CD4-positive, alpha-beta T cell (primary cell): ENCODE measurements at regions of chr16 and their contacts with region 1.

Region 1: GRCh38 chr16:56931892-56932720 is at the start of gene HERPUD1:
- DNase-seq: peak; percentile 98 to 100 (median 99)
- ATAC-seq: peak; percentile 96
- H3K4me3 ChIP-seq: peak within 1 kb of the TSS; percentile 99
- H3K4me3 Mint-ChIP-seq: peak within 1 kb of the TSS; percentile 99
- H3K27ac ChIP-seq: peak within 1 kb of the TSS; percentile 81 to 93
- H3K27ac Mint-ChIP-seq: peak within 1 kb of the TSS; percentile 96
- H3K4me1 ChIP-seq: peaks cover 28% of the 10 kb centered on the region
- H3K4me1 Mint-ChIP-seq: peaks cover 39% of the 10 kb centered on the region
- H3K27me3 ChIP-seq: no peaks in the 10 kb centered on the region
- H3K27me3 Mint-ChIP-seq: no peaks in the 10 kb centered on the region
- CTCF ChIP-seq: peak; percentile 27
- total RNA-seq, gene HERPUD1: 217 to 227 TPM

Region 2: GRCh38 chr16:56713794-56714193 is 218.3 kb before region 1 on chr16:
- CTCF ChIA-PET with region 1: no interaction called
- POLR2A ChIA-PET with region 1: no interaction called
- intact Hi-C with region 1: no loop called
- DNase-seq: no peak
- ATAC-seq: no peak
- H3K4me3 ChIP-seq: no peak overlapping the region
- H3K4me3 Mint-ChIP-seq: no peak overlapping the region
- H3K27ac ChIP-seq: no peak overlapping the region
- H3K27ac Mint-ChIP-seq: no peak overlapping the region
- H3K4me1 ChIP-seq: peaks cover 16% of the 10 kb centered on the region
- H3K4me1 Mint-ChIP-seq: peaks cover 20% of the 10 kb centered on the region
- H3K27me3 ChIP-seq: no peaks in the 10 kb centered on the region
- H3K27me3 Mint-ChIP-seq: no peaks in the 10 kb centered on the region
- CTCF ChIP-seq: no peak

Region 3: DNA sequence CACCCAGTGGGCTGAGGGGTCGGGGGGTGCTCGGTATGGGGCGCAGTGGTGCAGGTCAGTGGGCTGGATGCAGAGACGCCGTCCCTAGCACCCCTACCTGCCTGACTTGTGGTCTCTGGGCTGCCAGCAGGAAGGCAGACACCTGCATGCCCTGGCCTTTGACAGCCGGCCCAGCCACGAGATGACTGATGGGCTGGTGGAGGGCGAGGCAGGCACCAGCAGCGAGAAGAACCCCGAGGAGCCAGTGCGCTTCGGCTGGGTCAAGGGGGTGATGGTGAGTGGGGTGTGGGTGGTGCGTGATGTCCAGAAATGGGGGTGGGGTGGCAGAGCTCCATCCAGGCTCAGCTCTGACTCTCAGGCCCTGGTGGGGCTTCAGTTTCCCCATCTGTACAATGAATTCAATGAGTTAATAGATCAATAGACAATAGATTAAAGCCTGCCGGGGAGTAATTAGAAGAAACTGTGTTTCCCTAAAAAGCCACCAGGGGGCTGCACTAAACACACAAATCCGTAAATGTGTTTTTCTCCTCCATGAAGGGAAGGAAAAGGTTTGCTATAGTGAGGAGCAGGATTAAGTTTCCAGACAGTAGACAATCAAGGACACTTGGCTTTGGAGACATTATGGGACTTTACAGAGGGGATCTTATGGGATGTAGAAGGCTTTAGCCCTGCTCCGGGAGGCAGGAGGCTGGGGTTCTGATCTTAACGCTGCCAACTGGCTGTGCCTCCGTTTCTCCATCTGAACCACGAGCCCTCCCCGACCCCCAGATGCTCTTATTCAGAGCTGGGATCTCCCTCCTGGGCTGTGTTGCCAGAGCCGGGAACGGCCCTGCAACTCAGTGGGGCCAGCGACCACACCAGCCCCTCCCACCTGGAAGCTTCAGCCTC is 64.9 kb before region 1 on chr16:
- CTCF ChIA-PET with region 1: interaction called, 3 read pairs
- POLR2A ChIA-PET with region 1: interaction called, 3 read pairs
- intact Hi-C with region 1: loop called (anchors 5 kb)
- DNase-seq: peak in 10 of 14 experiments; percentile 7 to 76 (median 29)
- ATAC-seq: peak; percentile 56
- H3K4me3 ChIP-seq: no peak overlapping the region
- H3K4me3 Mint-ChIP-seq: no peak overlapping the region
- H3K27ac ChIP-seq: no peak overlapping the region
- H3K27ac Mint-ChIP-seq: no peak overlapping the region
- H3K4me1 ChIP-seq: peaks cover 33% of the 10 kb centered on the region
- H3K4me1 Mint-ChIP-seq: peaks cover 13% of the 10 kb centered on the region
- H3K27me3 ChIP-seq: no peaks in the 10 kb centered on the region
- H3K27me3 Mint-ChIP-seq: no peaks in the 10 kb centered on the region
- CTCF ChIP-seq: peak; percentile 84

Region 4: GRCh38 chr16:56944954-56945839 is 13.1 kb after region 1 on chr16:
- CTCF ChIA-PET with region 1: no interaction called
- POLR2A ChIA-PET with region 1: interaction called, 51 read pairs
- intact Hi-C with region 1: no loop called
- DNase-seq: no peak
- ATAC-seq: peak; percentile 13
- H3K4me3 ChIP-seq: no peak overlapping the region
- H3K4me3 Mint-ChIP-seq: no peak overlapping the region
- H3K27ac ChIP-seq: no peak overlapping the region
- H3K27ac Mint-ChIP-seq: peak overlapping the region; percentile 10
- H3K4me1 ChIP-seq: peaks cover 3% of the 10 kb centered on the region
- H3K4me1 Mint-ChIP-seq: no peaks in the 10 kb centered on the region
- H3K27me3 ChIP-seq: no peaks in the 10 kb centered on the region
- H3K27me3 Mint-ChIP-seq: no peaks in the 10 kb centered on the region
- CTCF ChIP-seq: no peak

Region 5: DNA sequence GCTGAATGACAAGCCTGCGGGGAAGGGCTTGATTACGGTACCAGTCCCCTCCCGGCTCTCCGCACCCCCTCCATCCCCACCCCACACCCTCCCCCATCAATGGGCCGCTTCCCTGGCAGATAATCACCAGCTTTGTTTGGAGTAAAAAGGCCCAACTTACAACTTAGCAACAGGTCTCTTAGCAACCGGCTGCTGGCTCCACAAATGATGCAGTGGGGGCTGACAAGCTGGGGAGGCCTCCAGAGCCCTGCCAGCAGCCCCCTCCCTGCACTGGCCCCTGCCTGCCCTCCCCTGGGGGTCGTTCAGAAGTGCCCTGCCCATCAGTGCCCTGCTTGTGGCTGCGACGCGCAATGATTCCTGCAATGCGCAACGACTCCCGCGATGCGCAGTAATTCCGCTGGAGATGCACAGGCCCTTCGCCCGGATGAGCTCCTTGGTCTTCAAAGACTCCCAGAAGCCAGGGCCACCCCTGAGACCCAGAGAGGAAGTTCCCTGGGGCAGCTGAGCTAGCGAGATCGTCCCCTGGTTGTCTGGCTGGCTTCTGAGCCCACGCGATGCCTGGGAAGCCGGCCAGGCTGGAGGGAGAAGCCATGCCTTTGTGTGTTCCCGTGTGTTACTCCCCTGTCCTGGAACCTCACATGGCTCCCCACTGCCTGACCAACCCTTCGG is 183.5 kb after region 1 on chr16:
- CTCF ChIA-PET with region 1: no interaction called
- POLR2A ChIA-PET with region 1: no interaction called
- intact Hi-C with region 1: no loop called
- DNase-seq: no peak
- ATAC-seq: no peak
- H3K4me3 ChIP-seq: no peak overlapping the region
- H3K4me3 Mint-ChIP-seq: no peak overlapping the region
- H3K27ac ChIP-seq: no peak overlapping the region
- H3K27ac Mint-ChIP-seq: no peak overlapping the region
- H3K4me1 ChIP-seq: no peaks in the 10 kb centered on the region
- H3K4me1 Mint-ChIP-seq: no peaks in the 10 kb centered on the region
- H3K27me3 ChIP-seq: no peaks in the 10 kb centered on the region
- H3K27me3 Mint-ChIP-seq: no peaks in the 10 kb centered on the region
- CTCF ChIP-seq: no peak

Region 6: DNA sequence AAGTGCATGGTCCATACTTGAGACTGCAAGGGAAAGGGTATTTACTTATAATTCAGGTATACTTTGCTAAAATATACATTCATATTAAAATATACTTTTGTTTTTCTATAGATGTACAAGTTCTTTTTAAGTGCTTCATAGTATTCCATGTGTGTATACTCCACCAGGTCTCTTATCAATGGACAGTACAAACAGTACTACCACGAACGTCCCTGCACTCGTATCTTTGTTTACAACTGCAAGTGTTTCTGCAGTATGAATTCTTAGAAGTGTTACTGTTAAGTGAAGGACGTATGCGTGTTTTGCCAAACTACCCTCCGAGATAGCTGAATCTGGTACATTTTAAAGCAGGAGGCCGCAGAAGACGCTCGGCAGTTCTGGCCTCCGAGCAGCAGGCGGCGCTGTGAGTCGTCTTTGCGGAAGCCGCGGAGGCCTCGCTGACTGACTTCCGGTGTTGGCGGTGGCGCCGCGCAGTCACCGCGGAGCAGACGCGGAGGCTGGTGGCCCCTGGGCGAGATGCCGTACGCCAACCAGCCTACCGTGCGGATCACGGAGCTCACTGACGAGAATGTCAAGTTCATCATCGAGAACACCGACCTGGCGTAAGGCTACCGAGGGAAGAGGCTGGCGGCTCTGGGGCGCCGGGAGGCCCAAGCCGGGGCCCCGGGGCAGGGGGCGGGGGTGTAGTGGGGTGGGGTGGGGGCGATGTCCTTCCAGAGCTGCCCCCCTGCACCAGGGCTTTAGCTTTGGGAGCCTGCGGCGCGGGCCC is 530.3 kb after region 1 on chr16 and contains the start of gene POLR2C:
- CTCF ChIA-PET with region 1: no interaction called
- POLR2A ChIA-PET with region 1: no interaction called
- intact Hi-C with region 1: loop called in 1 of 2 experiments (anchors 10 kb)
- DNase-seq: peak; percentile 86 to 96 (median 92)
- ATAC-seq: peak; percentile 96
- H3K4me3 ChIP-seq: peak within 1 kb of the TSS; percentile 79
- H3K4me3 Mint-ChIP-seq: peak within 1 kb of the TSS; percentile 100
- H3K27ac ChIP-seq: peak within 1 kb of the TSS; percentile 33 to 52
- H3K27ac Mint-ChIP-seq: peak within 1 kb of the TSS; percentile 92
- H3K4me1 ChIP-seq: peaks cover 32% of the 10 kb centered on the region
- H3K4me1 Mint-ChIP-seq: peaks cover 43% of the 10 kb centered on the region
- H3K27me3 ChIP-seq: no peaks in the 10 kb centered on the region
- H3K27me3 Mint-ChIP-seq: no peaks in the 10 kb centered on the region
- CTCF ChIP-seq: peak; percentile 99
- total RNA-seq, gene POLR2C: 124 to 125 TPM